Right ventricle myocardium inferior (tissue), 1 donor: ENCODE measurements at regions of chr19 and their contacts with region 1.

Region 1: DNA sequence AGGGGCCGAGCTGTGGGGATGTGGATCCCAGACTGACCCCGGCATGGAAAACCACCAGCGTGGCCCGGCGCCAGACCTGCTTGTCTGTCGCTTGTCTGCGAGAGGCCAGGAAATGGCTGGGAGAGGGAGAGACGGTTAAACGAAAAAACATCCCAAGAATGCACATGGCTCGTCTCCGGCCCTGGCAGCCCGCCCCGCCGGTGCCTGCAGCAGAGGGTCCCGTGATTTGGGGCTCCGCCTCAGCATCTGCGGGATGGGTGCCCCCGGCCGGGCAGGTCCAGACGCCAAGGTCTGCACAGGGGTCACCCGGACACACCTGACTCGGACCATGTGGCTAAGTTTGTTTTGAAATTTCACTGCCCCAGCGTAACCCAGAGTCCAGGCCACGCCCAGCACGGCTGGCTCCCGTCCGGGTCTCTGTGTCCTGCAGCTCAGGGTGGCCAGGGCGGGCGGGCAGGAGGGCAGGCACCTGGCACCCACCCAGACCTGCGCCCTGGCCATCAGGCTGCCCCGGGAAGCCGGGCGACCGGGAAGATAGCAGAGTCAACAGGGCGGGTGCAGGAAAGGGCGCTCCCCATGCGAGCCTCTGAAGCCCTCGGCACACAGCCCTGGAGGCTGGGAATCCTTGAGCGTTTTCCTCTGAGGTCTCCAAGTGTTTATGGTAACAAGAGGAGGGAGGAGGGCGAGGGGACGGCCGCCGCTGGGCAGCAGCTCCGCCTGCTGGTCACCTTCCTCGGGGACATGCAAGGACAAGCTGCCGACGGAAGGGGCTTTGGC is 103.2 kb downstream of the GADD45B start:
- DNase-seq: peak; percentile 93
- ATAC-seq: peak; percentile 82

Region 2: DNA sequence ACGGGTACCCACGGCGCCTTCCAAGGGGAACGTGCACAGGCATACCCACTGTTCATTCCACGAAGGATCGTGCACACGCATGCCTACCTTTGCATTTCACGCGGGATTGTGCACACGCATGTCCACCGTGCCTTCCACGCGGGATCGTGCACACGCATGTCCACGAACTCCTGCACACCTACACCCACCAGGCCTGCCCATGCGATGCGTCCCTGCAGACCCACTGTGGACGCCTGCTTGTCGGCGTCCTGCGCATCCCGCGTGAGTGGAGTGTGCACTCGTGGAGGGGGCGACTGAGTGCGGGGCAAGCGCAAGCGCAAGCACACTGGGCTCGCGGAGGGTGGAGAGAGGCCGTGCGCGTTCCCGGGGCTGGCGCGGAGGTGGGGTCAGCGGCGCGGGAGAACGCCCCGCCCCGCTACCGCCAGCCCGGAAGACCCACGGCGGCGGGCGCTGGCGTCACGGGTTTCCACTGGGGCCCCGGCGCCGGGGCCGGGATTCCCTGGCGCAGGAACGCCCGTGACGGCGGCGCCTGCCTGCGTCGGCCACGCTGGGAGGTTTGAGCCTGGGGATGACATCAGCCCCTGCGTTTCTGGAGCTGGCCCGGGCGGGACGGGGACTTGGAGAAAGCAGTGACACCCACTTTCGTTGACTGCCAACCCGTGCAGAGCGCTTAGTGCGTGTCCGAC is 84.5 kb before region 1 on chr19:
- intact Hi-C with region 1: loop called (anchors 1 kb)
- DNase-seq: peak; percentile 88
- ATAC-seq: peak; percentile 80

Region 3: DNA sequence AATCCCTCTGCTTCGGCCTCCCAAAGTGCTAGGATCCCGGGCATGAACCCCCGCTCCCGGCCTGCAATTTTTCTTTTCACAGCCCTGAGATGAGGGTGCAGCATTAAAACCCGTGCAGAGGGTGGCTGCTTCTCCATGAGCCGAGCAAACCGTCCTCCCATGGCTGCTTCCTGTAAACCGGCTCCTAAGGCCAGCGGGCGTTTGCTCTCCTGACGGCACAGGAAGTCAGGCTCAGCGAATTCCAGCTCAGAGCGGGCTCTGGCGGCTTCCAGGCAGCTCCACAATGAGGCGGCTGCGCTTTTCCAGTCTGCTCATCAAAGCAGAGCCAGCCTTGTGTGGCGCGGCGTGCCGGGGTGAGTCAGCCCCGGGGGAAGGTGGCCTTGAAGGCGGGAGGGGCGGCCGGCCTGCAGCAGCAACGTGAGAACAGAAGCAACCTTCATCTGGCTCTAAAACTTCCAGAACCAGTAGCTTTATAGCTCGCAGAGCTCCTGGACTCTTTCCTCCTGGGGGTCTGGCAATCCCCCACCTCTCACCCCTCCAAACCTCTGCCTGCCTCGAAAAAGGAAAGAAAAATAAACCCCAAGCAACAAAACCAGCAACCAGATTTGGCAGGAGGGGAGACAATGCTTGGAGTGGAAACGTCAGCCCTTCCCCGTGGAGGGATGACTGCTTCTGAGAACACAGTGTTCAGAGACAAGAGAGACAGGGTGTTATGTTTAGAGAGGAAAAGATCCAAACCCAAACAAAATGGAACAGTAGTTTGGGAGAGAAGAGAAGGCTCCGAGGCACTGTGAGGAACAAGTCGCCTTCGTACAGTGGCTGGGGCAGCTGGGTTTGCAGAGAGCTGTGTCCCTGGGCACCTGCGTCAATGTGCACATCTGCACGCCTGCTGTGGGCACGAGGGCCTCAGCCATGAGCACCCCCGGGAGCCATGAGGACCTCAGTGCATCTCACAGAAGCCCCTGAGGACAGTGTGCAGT is 35.3 kb before region 1 on chr19:
- intact Hi-C with region 1: loop called (anchors 1 kb)
- DNase-seq: peak; percentile 96
- ATAC-seq: peak; percentile 81

Region 4: GRCh38 chr19:2610637-2611482 is 31.8 kb after region 1 on chr19:
- intact Hi-C with region 1: loop called (anchors 5 kb)
- DNase-seq: peak; percentile 95
- ATAC-seq: peak; percentile 90